Tibial artery (tissue), 4 donors: ENCODE measurements at regions of chr2 and their contacts with region 1.

Region 1: DNA sequence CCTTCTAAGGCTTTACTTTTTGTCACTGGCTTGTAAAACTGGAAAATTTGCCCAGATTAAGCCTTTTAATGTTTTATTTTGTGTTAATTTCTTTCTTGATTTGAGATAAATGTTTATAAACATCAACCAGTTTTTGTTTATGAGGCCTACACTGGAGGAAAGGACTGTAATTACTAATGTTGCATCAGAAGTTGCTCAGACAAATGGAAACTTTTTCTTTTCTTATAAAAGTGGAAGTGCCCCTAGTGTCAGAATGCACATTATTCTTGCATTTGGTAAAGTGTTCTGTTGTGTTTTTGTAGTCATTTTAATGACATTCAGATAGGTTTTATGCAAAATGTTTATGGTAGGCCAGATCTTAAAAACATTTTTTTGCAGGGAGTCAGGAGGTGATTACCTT is 25.3 kb downstream of the LCLAT1 start:
- DNase-seq: no peak
- H3K4me3 ChIP-seq: no peak overlapping the region
- H3K27ac ChIP-seq: peak overlapping the region; percentile 32 to 33
- H3K4me1 ChIP-seq: peaks cover 0 to 38% (median 0%) of the 10 kb centered on the region in 4 donors
- H3K27me3 ChIP-seq: no peaks in the 10 kb centered on the region
- CTCF ChIP-seq: no peak

Region 2: GRCh38 chr2:30231212-30231995 is 240.9 kb before region 1 on chr2 and contains the start of gene LBH:
- intact Hi-C with region 1: loop called (anchors 10 kb)
- DNase-seq: peak; percentile 84 to 96
- H3K4me3 ChIP-seq: peak within 1 kb of the TSS; percentile 64 to 91
- H3K27ac ChIP-seq: peak within 1 kb of the TSS; percentile 93 to 94
- H3K4me1 ChIP-seq: peaks cover 0 to 47% (median 38%) of the 10 kb centered on the region in 4 donors
- H3K27me3 ChIP-seq: no peaks in the 10 kb centered on the region
- CTCF ChIP-seq: no peak